Thyroid gland (tissue), 4 donors: ENCODE measurements at regions of chr14 and their contacts with region 1.

Region 1: GRCh38 chr14:55689981-55690863 is 110.2 kb downstream of the KTN1 start:
- DNase-seq: no peak
- H3K4me3 ChIP-seq: no peak overlapping the region
- H3K27ac ChIP-seq: no peak overlapping the region
- H3K4me1 ChIP-seq: no peaks in the 10 kb centered on the region
- H3K27me3 ChIP-seq: no peaks in the 10 kb centered on the region
- CTCF ChIP-seq: no peak
- POLR2A ChIP-seq: no peak

Region 2: DNA sequence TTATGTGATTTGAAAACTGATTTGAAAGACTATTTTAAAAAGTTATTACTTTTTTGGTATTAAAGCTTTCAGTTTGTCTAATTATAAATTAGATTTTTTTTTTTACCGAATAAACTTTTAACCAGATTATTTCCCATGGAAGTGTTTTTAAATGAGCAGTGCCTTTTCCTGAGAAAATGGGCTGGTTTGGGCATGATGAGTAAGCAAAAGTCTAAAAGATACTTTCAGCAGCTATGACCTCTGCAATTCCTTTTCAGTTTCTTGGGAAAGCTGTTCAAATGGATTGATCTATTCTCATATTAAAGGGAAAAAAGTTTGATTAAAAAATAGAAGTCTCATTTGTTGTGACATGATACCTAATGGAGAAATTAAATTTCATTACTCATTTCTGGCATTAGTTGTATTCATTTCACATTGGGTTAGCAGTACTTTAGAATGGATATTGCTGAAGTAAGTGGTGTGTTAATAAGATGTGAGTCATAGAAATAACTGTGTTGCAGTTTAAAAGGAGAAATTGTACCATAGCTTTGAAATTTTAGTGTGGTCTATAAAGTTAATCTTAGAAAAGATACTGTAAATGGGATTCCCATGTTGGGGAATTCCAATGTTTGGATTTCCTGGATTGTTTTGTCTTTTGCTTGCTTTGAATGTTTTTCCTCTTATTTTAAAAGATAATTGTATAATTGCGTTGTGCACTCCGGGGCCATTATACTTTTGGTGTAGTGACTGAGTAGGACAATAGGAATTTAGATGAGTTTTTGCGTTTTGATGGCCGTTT is 89.2 kb before region 1 on chr14:
- intact Hi-C with region 1: loop called (anchors 10 kb)
- DNase-seq: no peak
- H3K4me3 ChIP-seq: no peak overlapping the region
- H3K27ac ChIP-seq: peak overlapping the region in 1 of 3 donors; percentile 3
- H3K4me1 ChIP-seq: peaks cover 15 to 23% of the 10 kb centered on the region in 2 donors
- H3K27me3 ChIP-seq: no peaks in the 10 kb centered on the region
- CTCF ChIP-seq: no peak
- POLR2A ChIP-seq: no peak

Region 3: GRCh38 chr14:55628426-55628825 is 61.8 kb before region 1 on chr14:
- intact Hi-C with region 1: no loop called
- DNase-seq: no peak
- H3K4me3 ChIP-seq: no peak overlapping the region
- H3K27ac ChIP-seq: no peak overlapping the region
- H3K4me1 ChIP-seq: no peaks in the 10 kb centered on the region
- H3K27me3 ChIP-seq: no peaks in the 10 kb centered on the region
- CTCF ChIP-seq: no peak
- POLR2A ChIP-seq: no peak